Activated CD4-positive, alpha-beta T cell treated with anti-CD3 and anti-CD28 coated beads, Interleukin-2, amount 10 ng/mL, durations not matched to agents 24 days and 14 days (primary cell): ENCODE measurements at regions of chr5 and their contacts with region 1.

Region 1: GRCh38 chr5:39164529-39165402 is 54.6 kb downstream of the FYB1 start:
- DNase-seq: peak; percentile 75
- H3K4me3 Mint-ChIP-seq: peak overlapping the region; percentile 71
- H3K27ac Mint-ChIP-seq: peak overlapping the region; percentile 98
- H3K4me1 Mint-ChIP-seq: peaks cover 66% of the 10 kb centered on the region
- H3K27me3 Mint-ChIP-seq: no peaks in the 10 kb centered on the region

Region 2: DNA sequence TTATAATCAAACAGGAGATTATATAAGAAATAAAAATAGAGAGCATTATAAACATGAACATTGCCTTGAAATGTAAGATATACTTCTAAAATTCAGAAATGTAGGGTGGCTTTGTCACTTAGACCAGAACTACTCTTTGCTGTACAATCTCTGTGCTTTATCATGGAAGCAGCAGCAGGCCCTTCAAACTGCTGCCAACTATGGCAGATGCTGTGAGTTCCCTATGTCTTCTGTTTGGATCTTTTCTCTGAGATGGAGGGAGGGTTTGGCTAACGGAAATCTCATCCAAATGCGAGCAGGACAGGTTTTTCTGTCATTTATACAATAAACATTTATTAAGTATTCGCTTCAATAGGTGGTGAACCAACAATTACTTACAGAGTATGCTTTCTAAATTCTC is 55.8 kb before region 1 on chr5:
- intact Hi-C with region 1: no loop called
- DNase-seq: no peak
- H3K4me3 Mint-ChIP-seq: no peak overlapping the region
- H3K27ac Mint-ChIP-seq: no peak overlapping the region
- H3K4me1 Mint-ChIP-seq: peaks cover 2% of the 10 kb centered on the region
- H3K27me3 Mint-ChIP-seq: no peaks in the 10 kb centered on the region

Region 3: GRCh38 chr5:39148983-39149534 is 15.7 kb before region 1 on chr5:
- intact Hi-C with region 1: loop called (anchors 1 kb)
- DNase-seq: no peak
- H3K4me3 Mint-ChIP-seq: no peak overlapping the region
- H3K27ac Mint-ChIP-seq: peak overlapping the region; percentile 68
- H3K4me1 Mint-ChIP-seq: peaks cover 43% of the 10 kb centered on the region
- H3K27me3 Mint-ChIP-seq: no peaks in the 10 kb centered on the region

Region 4: DNA sequence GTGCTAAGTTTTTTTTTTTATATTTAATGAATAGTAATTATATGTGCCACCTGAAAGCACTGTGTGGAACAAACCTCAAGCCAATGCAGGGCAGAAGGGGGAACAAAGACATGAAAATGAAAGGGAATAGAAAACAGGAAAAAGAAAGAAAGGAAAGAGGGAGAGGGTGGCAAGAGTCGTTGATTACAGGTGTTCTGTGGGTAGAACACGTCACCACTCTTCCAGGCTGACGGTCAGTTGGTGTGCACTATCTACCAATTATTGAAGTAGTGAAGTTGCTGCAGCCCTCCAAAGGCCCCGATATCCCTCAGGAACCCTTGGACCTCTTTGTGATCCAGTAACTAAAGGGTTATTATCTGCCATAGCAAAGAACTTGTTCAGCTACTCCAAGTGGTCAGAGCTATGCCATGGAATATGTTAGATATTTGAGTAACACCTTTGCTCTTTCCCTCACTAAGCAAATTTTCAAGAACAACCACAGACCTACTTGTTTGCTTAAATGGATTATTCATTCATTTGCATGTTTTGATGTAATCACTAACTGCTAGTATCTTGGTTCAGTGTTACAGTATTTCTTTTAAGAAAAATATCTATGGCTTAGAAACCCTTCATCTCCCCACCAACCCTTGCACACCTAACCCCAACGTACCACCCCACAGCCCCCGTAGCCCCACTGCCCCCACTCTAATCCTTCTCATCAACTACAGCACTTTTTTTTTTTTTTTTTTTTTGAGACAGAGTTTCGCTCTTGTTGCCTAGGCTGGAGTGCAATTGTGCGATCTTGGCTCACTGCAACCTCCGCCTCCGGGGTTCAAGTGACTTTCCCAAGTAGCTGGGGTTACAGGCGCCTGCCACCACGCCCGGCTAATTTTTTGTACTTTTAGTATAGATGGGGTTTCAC is 23.3 kb after region 1 on chr5:
- intact Hi-C with region 1: loop called (anchors 1 kb)
- DNase-seq: peak; percentile 76
- H3K4me3 Mint-ChIP-seq: peak overlapping the region; percentile 78
- H3K27ac Mint-ChIP-seq: peak overlapping the region; percentile 97
- H3K4me1 Mint-ChIP-seq: peaks cover 81% of the 10 kb centered on the region
- H3K27me3 Mint-ChIP-seq: no peaks in the 10 kb centered on the region

Region 5: GRCh38 chr5:39209924-39210323 is 45.2 kb after region 1 on chr5:
- intact Hi-C with region 1: loop called (anchors 1 kb)
- DNase-seq: peak; percentile 95
- H3K4me3 Mint-ChIP-seq: peak overlapping the region; percentile 75
- H3K27ac Mint-ChIP-seq: peak overlapping the region; percentile 92
- H3K4me1 Mint-ChIP-seq: peaks cover 79% of the 10 kb centered on the region
- H3K27me3 Mint-ChIP-seq: no peaks in the 10 kb centered on the region

Region 6: GRCh38 chr5:39376293-39376714 is 211.5 kb after region 1 on chr5:
- intact Hi-C with region 1: no loop called
- DNase-seq: peak; percentile 82
- H3K4me3 Mint-ChIP-seq: no peak overlapping the region
- H3K27ac Mint-ChIP-seq: no peak overlapping the region
- H3K4me1 Mint-ChIP-seq: no peaks in the 10 kb centered on the region
- H3K27me3 Mint-ChIP-seq: peaks cover 20% of the 10 kb centered on the region

Region 7: DNA sequence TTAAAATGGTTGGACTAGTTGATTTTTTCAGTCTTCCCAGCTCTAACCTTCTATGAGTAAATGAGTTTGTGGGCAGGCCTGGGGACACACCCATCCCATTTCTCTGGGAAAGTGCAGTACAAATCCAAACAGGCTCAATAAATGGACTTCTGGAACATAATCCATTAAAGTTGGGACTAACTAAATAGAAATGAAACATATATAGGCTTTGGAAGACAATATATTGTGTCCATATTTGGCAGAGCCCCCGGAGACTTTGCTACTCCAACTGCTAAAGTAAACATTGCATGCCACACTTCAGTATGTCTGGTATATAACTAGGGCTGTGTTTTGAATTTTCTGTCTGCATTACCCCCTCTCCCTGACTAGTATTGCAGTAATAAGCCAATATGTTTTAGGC is 451.4 kb after region 1 on chr5:
- intact Hi-C with region 1: no loop called
- DNase-seq: no peak
- H3K4me3 Mint-ChIP-seq: no peak overlapping the region
- H3K27ac Mint-ChIP-seq: no peak overlapping the region
- H3K4me1 Mint-ChIP-seq: no peaks in the 10 kb centered on the region
- H3K27me3 Mint-ChIP-seq: peaks cover 2% of the 10 kb centered on the region

Region 8: DNA sequence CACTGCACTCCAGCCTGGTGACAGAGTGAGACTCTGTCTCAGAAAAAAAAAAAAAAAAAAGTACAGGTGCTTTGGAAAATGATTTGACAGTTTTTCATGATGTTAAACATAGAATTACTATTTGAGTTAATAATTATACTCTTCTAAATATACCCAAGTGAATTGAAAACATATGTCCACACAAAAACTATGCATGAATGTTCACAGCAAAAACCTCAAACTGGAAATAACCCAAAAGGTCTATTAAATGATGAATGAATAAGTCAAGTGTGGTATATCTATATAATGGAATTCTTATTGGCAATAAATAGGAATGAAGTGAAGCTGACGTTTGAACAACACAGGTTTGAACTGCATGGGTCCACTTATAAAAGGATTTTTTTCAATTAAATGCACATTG is 467.2 kb after region 1 on chr5:
- intact Hi-C with region 1: no loop called
- DNase-seq: no peak
- H3K4me3 Mint-ChIP-seq: no peak overlapping the region
- H3K27ac Mint-ChIP-seq: no peak overlapping the region
- H3K4me1 Mint-ChIP-seq: no peaks in the 10 kb centered on the region
- H3K27me3 Mint-ChIP-seq: peaks cover 22% of the 10 kb centered on the region